Endothelial cell of umbilical vein (primary cell): ENCODE measurements at regions of chr4 and their contacts with region 1.

Region 1: GRCh38 chr4:161320377-161320776 is 843.4 kb downstream of the FSTL5 start:
- DNase-seq: peak; percentile 19
- H3K4me3 ChIP-seq: no peak overlapping the region
- H3K27ac ChIP-seq: no peak overlapping the region
- H3K4me1 ChIP-seq: no peaks in the 10 kb centered on the region
- H3K27me3 ChIP-seq: no peaks in the 10 kb centered on the region
- CTCF ChIP-seq: peak; percentile 26 to 39
- POLR2A ChIP-seq: no peak

Region 2: DNA sequence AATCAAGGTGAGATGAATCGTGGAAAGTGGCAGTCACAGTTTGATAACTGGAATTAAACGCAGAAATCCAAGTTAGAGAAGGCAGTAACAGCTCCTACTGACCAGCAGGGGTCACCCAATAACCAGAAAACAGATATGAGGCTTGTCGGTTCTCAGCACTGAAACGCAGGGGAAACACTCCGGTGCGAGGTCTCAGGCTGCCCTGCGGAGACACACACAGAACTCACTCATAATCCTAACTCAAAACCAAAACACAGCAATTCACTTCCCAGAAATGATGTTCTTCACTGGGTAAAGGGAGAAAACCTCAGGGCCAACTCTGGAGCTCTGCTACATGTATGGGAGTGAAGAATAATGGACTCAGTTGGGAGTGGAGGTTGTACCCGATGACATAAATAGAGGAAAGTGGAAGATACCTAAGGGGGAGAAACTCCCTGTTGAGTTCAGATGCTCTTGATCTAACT is 1833.1 kb before region 1 on chr4:
- CTCF ChIA-PET with region 1: no interaction called
- POLR2A ChIA-PET with region 1: no interaction called
- dilution Hi-C with region 1: no loop called
- intact Hi-C with region 1: loop called (anchors 10 kb)
- DNase-seq: peak; percentile 65
- H3K4me3 ChIP-seq: no peak overlapping the region
- H3K27ac ChIP-seq: no peak overlapping the region
- H3K4me1 ChIP-seq: no peaks in the 10 kb centered on the region
- H3K27me3 ChIP-seq: peaks cover 18 to 29% of the 10 kb centered on the region in 2 experiments
- CTCF ChIP-seq: peak; percentile 68 to 70
- POLR2A ChIP-seq: no peak

Region 3: GRCh38 chr4:161419822-161420221 is 99.4 kb after region 1 on chr4:
- CTCF ChIA-PET with region 1: no interaction called
- POLR2A ChIA-PET with region 1: no interaction called
- dilution Hi-C with region 1: no loop called
- intact Hi-C with region 1: loop called (anchors 2 kb)
- DNase-seq: peak; percentile 25
- H3K4me3 ChIP-seq: no peak overlapping the region
- H3K27ac ChIP-seq: no peak overlapping the region
- H3K4me1 ChIP-seq: no peaks in the 10 kb centered on the region
- H3K27me3 ChIP-seq: no peaks in the 10 kb centered on the region
- CTCF ChIP-seq: no peak
- POLR2A ChIP-seq: no peak

Region 4: GRCh38 chr4:161466316-161466715 is 145.9 kb after region 1 on chr4:
- CTCF ChIA-PET with region 1: no interaction called
- POLR2A ChIA-PET with region 1: no interaction called
- dilution Hi-C with region 1: no loop called
- intact Hi-C with region 1: no loop called
- DNase-seq: no peak
- H3K4me3 ChIP-seq: no peak overlapping the region
- H3K27ac ChIP-seq: no peak overlapping the region
- H3K4me1 ChIP-seq: no peaks in the 10 kb centered on the region
- H3K27me3 ChIP-seq: no peaks in the 10 kb centered on the region
- CTCF ChIP-seq: no peak
- POLR2A ChIP-seq: no peak

Region 5: DNA sequence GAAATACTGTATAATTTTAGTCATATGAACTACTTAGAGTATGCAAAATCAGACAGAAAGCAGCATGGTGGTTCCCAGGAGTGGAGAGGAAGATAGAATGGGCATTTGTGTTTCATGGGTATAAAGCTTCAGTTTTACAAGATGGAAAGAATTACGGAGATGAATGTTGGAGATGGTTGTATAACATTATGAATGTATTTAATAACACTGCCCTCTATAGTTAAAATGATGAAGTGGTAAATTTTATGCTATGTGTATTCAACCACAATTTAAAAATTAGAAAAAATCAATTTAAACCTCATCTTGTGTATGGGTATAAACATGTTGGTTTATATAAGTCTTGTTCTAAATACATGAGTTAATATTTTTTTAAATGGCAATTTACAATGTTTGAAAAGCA is 322.3 kb after region 1 on chr4:
- CTCF ChIA-PET with region 1: interaction called, 3 read pairs
- POLR2A ChIA-PET with region 1: no interaction called
- dilution Hi-C with region 1: no loop called
- intact Hi-C with region 1: loop called (anchors 5 kb)
- DNase-seq: peak; percentile 67
- H3K4me3 ChIP-seq: peak overlapping the region in 1 of 3 experiments; percentile 54
- H3K27ac ChIP-seq: no peak overlapping the region
- H3K4me1 ChIP-seq: peaks cover 8% of the 10 kb centered on the region
- H3K27me3 ChIP-seq: no peaks in the 10 kb centered on the region
- CTCF ChIP-seq: peak in 1 of 2 donors; percentile 10
- POLR2A ChIP-seq: no peak

Region 6: GRCh38 chr4:161949946-161950725 is 629.8 kb after region 1 on chr4:
- CTCF ChIA-PET with region 1: no interaction called
- POLR2A ChIA-PET with region 1: no interaction called
- dilution Hi-C with region 1: no loop called
- intact Hi-C with region 1: loop called (anchors 1 kb)
- DNase-seq: no peak
- H3K4me3 ChIP-seq: no peak overlapping the region
- H3K27ac ChIP-seq: no peak overlapping the region
- H3K4me1 ChIP-seq: no peaks in the 10 kb centered on the region
- H3K27me3 ChIP-seq: no peaks in the 10 kb centered on the region
- CTCF ChIP-seq: no peak
- POLR2A ChIP-seq: no peak

Region 7: DNA sequence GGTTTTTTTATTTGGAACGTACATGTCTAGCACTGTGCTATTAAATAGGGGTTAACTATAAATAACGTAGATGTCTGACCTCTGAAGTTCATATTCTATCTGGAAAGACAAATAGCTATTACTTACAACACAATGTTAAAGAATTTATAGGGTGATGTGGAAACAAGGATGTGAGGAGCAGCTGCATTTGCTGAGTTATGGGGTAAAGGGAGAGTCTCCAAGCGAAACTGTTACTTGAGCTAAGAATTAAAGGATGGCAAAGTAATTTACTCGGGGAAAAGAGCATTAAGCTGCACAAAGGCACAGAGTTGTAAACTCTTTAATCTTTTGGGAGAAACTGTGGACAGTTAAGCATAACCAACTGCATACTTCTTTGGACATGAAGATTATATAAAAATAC is 725.8 kb after region 1 on chr4:
- CTCF ChIA-PET with region 1: no interaction called
- POLR2A ChIA-PET with region 1: no interaction called
- dilution Hi-C with region 1: no loop called
- intact Hi-C with region 1: no loop called
- DNase-seq: no peak
- H3K4me3 ChIP-seq: no peak overlapping the region
- H3K27ac ChIP-seq: no peak overlapping the region
- H3K4me1 ChIP-seq: no peaks in the 10 kb centered on the region
- H3K27me3 ChIP-seq: no peaks in the 10 kb centered on the region
- CTCF ChIP-seq: no peak
- POLR2A ChIP-seq: no peak

Region 8: GRCh38 chr4:162163852-162164759 is 843.7 kb after region 1 on chr4 and contains the start of gene FSTL5:
- CTCF ChIA-PET with region 1: no interaction called
- POLR2A ChIA-PET with region 1: no interaction called
- dilution Hi-C with region 1: no loop called
- intact Hi-C with region 1: loop called (anchors 1 kb)
- DNase-seq: peak; percentile 82
- H3K4me3 ChIP-seq: peak within 1 kb of the TSS; percentile 4 to 82 (median 79)
- H3K27ac ChIP-seq: peak within 1 kb of the TSS; percentile 5
- H3K4me1 ChIP-seq: peaks cover 13% of the 10 kb centered on the region
- H3K27me3 ChIP-seq: peaks cover 0 to 1% of the 10 kb centered on the region in 2 experiments
- CTCF ChIP-seq: no peak
- POLR2A ChIP-seq: peak; percentile 52
- total RNA-seq, gene FSTL5: 1.3 and 1.6 TPM in 2 replicates